Endothelial cell of umbilical vein (primary cell): ENCODE measurements at regions of chr1 and their contacts with region 1.

Region 1: GRCh38 chr1:221166559-221167318 is 287.5 kb downstream of the HLX start:
- DNase-seq: no peak
- H3K4me3 ChIP-seq: no peak overlapping the region
- H3K27ac ChIP-seq: no peak overlapping the region
- H3K4me1 ChIP-seq: peaks cover 45% of the 10 kb centered on the region
- H3K27me3 ChIP-seq: no peaks in the 10 kb centered on the region
- CTCF ChIP-seq: no peak
- POLR2A ChIP-seq: no peak

Region 2: DNA sequence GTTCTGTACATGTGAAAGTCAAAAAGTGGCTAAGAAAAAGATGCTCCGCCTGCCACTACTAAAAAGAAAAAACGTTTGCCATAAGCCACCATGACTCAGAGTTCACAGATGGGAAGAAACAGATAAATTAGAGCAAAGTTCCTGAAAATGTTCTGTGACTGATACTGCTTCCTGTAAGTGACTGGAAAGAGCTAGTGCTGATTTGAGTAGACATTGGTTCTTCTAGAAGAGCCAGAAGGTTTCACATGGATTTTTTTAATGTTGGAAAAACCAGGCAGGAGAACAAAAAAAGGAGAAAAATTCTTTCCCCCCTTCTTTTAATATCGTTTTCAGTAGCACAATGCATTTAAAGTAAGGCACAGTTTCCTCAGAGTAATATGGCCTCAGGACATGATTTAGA is 66.1 kb before region 1 on chr1:
- CTCF ChIA-PET with region 1: no interaction called
- POLR2A ChIA-PET with region 1: no interaction called
- dilution Hi-C with region 1: no loop called
- intact Hi-C with region 1: loop called (anchors 5 kb)
- DNase-seq: peak; percentile 66
- H3K4me3 ChIP-seq: no peak overlapping the region
- H3K27ac ChIP-seq: peak overlapping the region; percentile 7
- H3K4me1 ChIP-seq: peaks cover 26% of the 10 kb centered on the region
- H3K27me3 ChIP-seq: no peaks in the 10 kb centered on the region
- CTCF ChIP-seq: no peak
- POLR2A ChIP-seq: no peak

Region 3: DNA sequence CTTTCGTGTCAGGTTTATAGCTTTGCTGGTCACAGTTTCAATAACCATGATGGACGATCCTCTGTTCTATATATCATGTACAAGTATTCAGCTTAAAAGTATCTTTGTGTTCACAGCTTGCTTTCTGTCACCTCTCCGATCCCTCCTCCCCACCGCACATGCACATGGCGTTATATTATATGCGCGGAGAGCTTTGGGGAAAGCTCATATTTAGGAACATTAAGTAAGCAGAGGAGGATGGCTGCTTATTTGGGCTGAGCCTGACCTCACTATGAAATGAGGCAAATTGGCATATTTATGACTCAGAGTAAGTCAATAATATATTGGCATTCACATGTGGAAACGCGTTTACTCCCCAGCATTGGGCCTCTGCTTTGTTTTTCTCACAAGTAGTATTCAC is 73.1 kb after region 1 on chr1:
- CTCF ChIA-PET with region 1: no interaction called
- POLR2A ChIA-PET with region 1: no interaction called
- dilution Hi-C with region 1: no loop called
- intact Hi-C with region 1: no loop called
- DNase-seq: no peak
- H3K4me3 ChIP-seq: no peak overlapping the region
- H3K27ac ChIP-seq: no peak overlapping the region
- H3K4me1 ChIP-seq: no peaks in the 10 kb centered on the region
- H3K27me3 ChIP-seq: no peaks in the 10 kb centered on the region
- CTCF ChIP-seq: no peak
- POLR2A ChIP-seq: no peak

Region 4: DNA sequence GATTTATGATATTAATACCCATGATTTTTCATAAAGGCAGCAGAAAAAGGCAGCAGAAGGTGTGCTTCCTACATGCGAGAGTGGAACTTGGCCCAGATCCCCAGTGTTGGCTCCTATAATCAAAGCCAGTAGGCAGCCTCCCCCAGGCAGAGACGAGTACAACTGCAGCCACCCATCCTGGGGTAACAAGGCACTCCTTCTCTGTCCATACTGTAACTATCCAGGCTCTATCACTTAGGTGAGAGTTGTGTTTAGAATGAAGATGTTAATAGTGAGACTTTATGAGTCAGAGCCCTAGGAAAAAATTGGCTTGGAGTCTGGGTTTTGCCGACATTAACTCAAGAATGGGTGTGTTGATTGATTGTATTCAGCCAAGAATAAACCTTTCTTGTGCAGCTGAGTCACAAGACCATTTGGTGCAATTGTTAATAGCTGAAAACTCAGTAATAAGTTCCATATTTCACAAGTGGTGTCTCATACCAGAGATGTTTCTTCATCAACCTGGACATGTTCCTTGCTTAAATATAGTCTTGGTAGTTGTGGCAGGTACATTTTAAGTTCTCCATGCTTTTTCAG is 252.9 kb after region 1 on chr1:
- CTCF ChIA-PET with region 1: no interaction called
- POLR2A ChIA-PET with region 1: no interaction called
- dilution Hi-C with region 1: no loop called
- intact Hi-C with region 1: loop called (anchors 10 kb)
- DNase-seq: peak; percentile 60
- H3K4me3 ChIP-seq: no peak overlapping the region
- H3K27ac ChIP-seq: no peak overlapping the region
- H3K4me1 ChIP-seq: peaks cover 24% of the 10 kb centered on the region
- H3K27me3 ChIP-seq: no peaks in the 10 kb centered on the region
- CTCF ChIP-seq: no peak
- POLR2A ChIP-seq: no peak